PC-9 (cell line): ENCODE measurements at regions of chr15 and their contacts with region 1.

Region 1: GRCh38 chr15:77160562-77161478 is 89.9 kb upstream of the TSPAN3 start:
- DNase-seq: peak; percentile 41 to 81
- H3K4me3 ChIP-seq: peak overlapping the region; percentile 21; the same call in 1 of the 2 replicates
- H3K27ac ChIP-seq: peak overlapping the region; percentile 62
- H3K4me1 ChIP-seq: peaks cover 30% of the 10 kb centered on the region
- H3K27me3 ChIP-seq: no peaks in the 10 kb centered on the region
- CTCF ChIP-seq: no peak

Region 2: GRCh38 chr15:76206325-76206976 is 954.4 kb before region 1 on chr15:
- CTCF ChIA-PET with region 1: no interaction called
- POLR2A ChIA-PET with region 1: interaction called, 25 read pairs
- intact Hi-C with region 1: no loop called
- DNase-seq: peak; percentile 33 to 69
- H3K4me3 ChIP-seq: no peak overlapping the region
- H3K27ac ChIP-seq: no peak overlapping the region
- H3K4me1 ChIP-seq: no peaks in the 10 kb centered on the region
- H3K27me3 ChIP-seq: no peaks in the 10 kb centered on the region
- CTCF ChIP-seq: no peak

Region 3: GRCh38 chr15:76763554-76763953 is 397.3 kb before region 1 on chr15:
- CTCF ChIA-PET with region 1: no interaction called
- POLR2A ChIA-PET with region 1: no interaction called
- intact Hi-C with region 1: no loop called
- DNase-seq: no peak
- H3K4me3 ChIP-seq: no peak overlapping the region
- H3K27ac ChIP-seq: no peak overlapping the region
- H3K4me1 ChIP-seq: no peaks in the 10 kb centered on the region
- H3K27me3 ChIP-seq: no peaks in the 10 kb centered on the region
- CTCF ChIP-seq: no peak

Region 4: DNA sequence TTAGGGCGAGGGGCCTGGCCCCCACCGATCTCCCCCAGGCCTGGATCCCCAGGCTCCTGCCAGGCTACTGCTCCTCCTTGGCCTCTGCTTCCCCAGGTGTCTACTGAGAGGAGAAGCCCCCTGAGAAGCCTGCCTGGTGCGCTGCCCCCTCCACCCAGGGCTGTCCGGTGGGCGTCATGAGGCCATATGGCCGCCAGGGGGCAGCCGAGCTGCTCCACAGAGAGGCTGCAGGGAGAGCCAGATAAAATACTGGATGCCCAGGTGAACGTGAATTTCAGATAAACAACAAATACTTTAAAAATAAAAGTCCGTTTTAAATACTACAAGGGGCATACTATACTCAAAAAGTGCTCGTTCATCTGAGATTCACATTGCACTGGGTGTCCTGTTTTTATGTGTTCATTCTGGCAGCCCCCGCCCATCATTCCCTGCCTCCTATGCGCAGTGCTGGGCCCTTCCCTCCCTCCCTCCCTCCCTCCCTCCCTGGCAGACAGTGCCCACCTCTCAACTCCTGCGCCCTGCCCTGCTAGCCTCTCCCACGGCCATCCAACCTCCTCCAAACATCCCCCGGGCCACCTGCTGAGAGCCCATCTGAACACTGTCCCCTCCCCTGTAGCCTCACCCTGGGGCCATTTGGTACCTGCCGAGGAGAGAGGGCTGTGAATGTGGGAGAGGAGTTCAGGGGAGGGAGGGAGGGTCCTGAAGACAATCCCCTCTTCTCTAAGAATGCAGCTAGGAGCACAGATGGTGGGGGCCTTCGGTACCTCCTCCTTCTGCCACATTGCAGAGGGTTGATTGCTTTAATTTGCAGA is 136.3 kb before region 1 on chr15:
- CTCF ChIA-PET with region 1: no interaction called
- POLR2A ChIA-PET with region 1: no interaction called
- intact Hi-C with region 1: no loop called
- DNase-seq: peak in 1 of 2 experiments; percentile 69
- H3K4me3 ChIP-seq: no peak overlapping the region
- H3K27ac ChIP-seq: no peak overlapping the region
- H3K4me1 ChIP-seq: no peaks in the 10 kb centered on the region
- H3K27me3 ChIP-seq: no peaks in the 10 kb centered on the region
- CTCF ChIP-seq: peak; percentile 98

Region 5: DNA sequence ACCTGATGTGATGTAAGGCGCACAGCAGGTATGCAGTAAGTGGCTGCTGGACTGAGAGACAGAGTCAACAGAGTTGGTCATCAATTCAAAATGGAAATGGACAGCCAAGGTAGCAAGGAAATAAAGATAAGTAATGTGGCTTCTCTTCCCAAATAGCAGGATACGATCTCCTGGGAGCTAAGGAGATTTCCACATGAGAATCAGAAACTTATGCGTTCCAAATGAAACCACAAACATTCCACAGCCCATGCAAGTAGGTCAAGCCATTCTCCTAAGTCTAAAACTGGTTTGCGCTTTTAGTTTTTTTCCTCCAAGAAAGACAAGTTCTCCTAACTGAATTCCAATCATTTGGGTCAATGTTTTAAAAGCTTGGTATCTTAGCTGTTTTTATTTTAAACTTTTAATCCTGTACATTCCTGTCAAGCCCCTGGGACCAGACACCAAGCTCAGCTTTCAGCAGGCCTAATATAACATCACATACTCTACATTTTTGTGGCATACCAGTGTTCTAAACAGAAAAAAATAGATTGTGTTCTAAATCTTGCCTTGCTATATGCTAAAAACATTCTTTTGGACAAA is 16.2 kb before region 1 on chr15:
- CTCF ChIA-PET with region 1: interaction called, 4 read pairs
- POLR2A ChIA-PET with region 1: interaction called, 4 read pairs
- intact Hi-C with region 1: loop called (anchors 1 kb)
- DNase-seq: peak; percentile 33 to 70
- H3K4me3 ChIP-seq: no peak overlapping the region
- H3K27ac ChIP-seq: peak overlapping the region; percentile 61
- H3K4me1 ChIP-seq: peaks cover 16% of the 10 kb centered on the region; the same call in 1 of the 2 replicates
- H3K27me3 ChIP-seq: no peaks in the 10 kb centered on the region
- CTCF ChIP-seq: no peak

Region 6: DNA sequence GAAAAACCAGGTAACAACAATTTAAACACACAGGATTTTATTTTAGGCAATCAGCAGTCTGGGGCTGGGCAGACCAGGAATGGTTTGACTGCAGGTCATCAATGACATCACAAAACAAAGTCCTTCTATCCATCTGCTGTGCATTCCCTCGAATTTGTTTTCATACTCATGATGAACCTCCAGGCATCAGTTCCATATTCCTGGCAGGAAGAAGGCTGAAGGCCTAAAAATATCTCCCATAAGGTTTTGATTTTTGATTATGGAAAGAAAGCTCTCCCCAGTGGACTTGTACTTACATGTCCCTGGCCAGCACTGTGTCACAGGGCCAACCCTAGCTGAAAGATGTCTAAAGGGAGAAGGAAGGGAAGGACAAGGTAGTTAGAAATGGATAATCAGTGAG is 151.7 kb after region 1 on chr15:
- CTCF ChIA-PET with region 1: no interaction called
- POLR2A ChIA-PET with region 1: interaction called, 18 read pairs
- intact Hi-C with region 1: no loop called
- DNase-seq: no peak
- H3K4me3 ChIP-seq: no peak overlapping the region
- H3K27ac ChIP-seq: no peak overlapping the region
- H3K4me1 ChIP-seq: no peaks in the 10 kb centered on the region
- H3K27me3 ChIP-seq: no peaks in the 10 kb centered on the region
- CTCF ChIP-seq: no peak

Region 7: DNA sequence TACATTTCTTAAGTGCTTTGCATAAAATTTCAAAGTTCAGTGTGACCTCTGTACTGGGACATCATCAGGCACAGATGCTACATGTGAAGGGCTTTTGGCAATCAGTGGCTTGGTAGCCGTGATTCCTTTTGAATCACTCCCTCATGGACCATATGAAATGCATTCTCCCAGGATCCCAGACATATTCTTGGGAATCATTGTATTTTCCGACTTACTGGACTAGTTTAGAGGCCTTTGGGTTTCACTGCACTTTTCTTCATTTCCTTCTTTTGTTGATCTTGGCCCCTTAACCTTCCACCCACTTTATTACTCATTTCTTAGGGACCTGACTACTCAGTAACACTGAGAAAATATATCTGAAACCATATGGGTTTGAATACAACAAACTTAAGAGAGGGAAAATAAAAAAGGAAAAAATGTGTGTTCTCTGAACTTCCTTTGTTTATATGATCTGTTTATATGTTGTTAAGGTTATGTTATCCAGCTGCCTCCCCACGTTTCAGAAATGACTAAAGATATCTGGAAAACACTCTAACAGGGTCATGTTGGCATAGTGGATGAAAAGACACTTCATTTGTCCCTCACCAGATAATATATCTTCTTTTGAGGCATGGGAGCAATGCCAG is 295.0 kb after region 1 on chr15:
- CTCF ChIA-PET with region 1: no interaction called
- POLR2A ChIA-PET with region 1: no interaction called
- intact Hi-C with region 1: no loop called
- DNase-seq: no peak
- H3K4me3 ChIP-seq: no peak overlapping the region
- H3K27ac ChIP-seq: 0 out of 2 replicates have a peak overlapping the region, but pooled peaks have one; percentile 0
- H3K4me1 ChIP-seq: peaks cover 10% of the 10 kb centered on the region
- H3K27me3 ChIP-seq: no peaks in the 10 kb centered on the region
- CTCF ChIP-seq: no peak

Region 8: DNA sequence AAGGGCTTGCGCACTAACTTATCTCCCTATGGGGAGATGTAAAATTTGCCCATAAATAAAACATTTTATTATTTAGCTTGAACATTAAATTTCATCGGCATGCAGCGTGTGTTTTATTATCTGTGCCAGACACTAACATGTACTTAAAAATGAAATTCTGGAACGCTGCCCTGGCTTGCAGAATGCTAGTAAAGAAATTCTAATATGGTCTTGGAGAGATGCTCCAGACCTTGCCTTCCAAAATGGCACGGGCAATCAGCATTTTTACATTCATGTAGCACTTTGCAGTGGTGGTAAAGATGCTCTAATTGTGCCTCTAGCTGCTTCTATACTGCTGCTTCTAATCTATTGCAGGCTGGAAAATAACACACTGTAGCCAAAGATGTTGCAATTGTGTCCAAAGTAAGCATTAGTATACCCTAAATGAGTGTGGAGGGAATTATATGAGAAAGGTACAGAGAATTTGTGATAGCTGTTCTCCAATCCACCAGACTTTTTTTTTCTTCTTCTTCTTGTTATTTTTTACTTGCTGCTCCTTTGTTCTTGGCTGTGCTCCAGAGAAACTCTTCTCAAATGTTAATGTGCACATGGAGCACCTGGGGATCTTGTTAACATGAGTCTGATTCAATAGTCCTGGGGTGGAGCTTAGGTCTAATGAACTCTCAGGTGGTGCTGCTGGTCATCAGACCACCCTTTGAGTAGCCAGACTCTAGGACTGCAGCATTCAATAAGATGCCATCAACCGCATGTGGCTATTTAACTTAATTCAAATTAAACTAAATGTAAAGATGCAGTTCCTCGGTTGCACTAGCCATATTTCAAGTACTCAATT is 1226.6 kb after region 1 on chr15:
- CTCF ChIA-PET with region 1: no interaction called
- POLR2A ChIA-PET with region 1: interaction called, 16 read pairs
- intact Hi-C with region 1: no loop called
- DNase-seq: no peak
- H3K4me3 ChIP-seq: no peak overlapping the region
- H3K27ac ChIP-seq: no peak overlapping the region
- H3K4me1 ChIP-seq: no peaks in the 10 kb centered on the region
- H3K27me3 ChIP-seq: peaks cover 60% of the 10 kb centered on the region
- CTCF ChIP-seq: no peak